ENCODE measurements at regions of chr1 and their contacts with region 1.

Region 1: DNA sequence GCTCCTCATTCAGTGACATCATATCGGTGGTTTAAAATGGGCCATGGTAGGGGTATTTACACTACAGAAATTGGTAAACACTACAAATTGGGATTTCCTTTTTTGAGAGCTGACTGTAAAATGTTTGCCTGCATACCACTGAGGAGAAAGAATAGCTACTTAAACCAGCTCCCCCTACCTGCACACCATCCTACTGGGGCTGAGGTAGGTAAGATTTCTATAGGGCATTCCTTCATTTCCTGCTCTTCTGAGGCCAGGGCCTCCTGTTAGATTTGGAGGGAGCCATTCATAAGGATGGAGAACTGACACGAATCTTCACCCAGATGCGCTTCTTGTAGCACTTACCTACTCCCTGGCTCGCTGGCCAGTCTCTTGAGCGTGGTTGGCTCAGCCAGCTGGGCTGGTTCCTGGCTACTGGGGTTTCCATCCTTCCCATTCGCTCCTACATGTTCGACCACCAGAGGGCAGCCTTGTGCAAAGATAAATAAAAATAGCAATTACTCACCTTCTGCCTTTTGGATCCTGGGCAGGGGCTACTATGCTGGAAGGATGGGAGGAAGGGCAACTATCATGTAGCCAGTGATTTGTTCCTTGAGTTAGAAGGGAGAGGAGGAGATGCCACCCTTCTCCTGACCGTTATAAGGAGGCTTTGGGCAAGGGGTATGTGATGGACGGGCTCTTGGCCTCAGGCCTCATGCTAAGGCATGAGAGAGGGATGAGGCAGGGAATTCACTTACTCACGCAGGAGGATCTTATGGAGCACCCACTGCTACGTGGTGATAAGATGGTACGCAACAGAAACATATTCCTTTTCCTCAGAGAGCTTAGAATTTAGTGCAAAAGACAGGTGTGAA is 10.7 kb downstream of the OPTC start:
- DNase-seq: peak; percentile 96
- H3K4me3 Mint-ChIP-seq: no peak overlapping the region
- H3K27ac Mint-ChIP-seq: no peak overlapping the region
- H3K4me1 Mint-ChIP-seq: peaks cover 22% of the 10 kb centered on the region
- H3K27me3 Mint-ChIP-seq: peaks cover 22% of the 10 kb centered on the region
- CTCF ChIP-seq: peak; percentile 94

Region 2: GRCh38 chr1:202599677-202600431 is 904.8 kb before region 1 on chr1:
- CTCF ChIA-PET with region 1: no interaction called
- POLR2A ChIA-PET with region 1: no interaction called
- intact Hi-C with region 1: no loop called
- DNase-seq: peak; percentile 89
- H3K4me3 Mint-ChIP-seq: no peak overlapping the region
- H3K27ac Mint-ChIP-seq: no peak overlapping the region
- H3K4me1 Mint-ChIP-seq: peaks cover 2% of the 10 kb centered on the region
- H3K27me3 Mint-ChIP-seq: no peaks in the 10 kb centered on the region
- CTCF ChIP-seq: peak; percentile 99

Region 3: DNA sequence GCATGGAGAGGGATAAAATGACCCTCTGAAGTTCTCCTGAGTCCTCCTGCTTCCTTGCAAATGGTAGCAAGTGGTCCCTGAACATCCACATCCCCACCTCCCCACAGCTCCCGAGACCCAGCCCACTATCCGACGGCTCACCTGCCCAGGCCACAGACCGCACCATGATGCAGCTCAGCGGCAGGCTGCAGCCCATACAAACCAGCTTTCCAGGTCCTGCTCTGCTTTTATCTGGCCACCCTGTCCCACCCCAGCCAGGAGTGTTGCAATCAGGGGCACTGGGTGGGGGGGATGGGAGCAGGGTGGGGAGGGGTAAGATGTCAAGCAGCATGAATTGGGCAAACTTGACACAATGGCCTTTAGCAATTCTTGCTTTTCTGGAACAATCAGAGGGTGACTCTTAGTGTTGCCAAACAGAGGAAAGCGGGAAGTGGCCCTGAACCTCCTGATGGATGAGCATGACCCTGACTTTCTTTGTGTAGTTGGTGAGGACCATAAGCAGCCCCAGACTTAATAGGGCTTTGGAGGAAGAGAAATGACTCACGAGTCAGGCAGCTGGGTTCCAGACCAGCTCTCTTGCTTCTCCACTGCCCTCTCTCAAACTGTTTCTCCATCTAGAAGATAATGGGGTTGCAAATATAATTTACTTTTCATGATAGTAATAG is 275.0 kb before region 1 on chr1 and contains the start of gene CHIT1:
- CTCF ChIA-PET with region 1: no interaction called
- POLR2A ChIA-PET with region 1: no interaction called
- intact Hi-C with region 1: no loop called
- DNase-seq: no peak
- H3K4me3 Mint-ChIP-seq: no peak within 1 kb of the TSS
- H3K27ac Mint-ChIP-seq: no peak within 1 kb of the TSS
- H3K4me1 Mint-ChIP-seq: no peaks in the 10 kb centered on the region
- H3K27me3 Mint-ChIP-seq: peaks cover 81% of the 10 kb centered on the region
- CTCF ChIP-seq: no peak
- total RNA-seq, gene CHIT1: not detected in 2 replicates

Region 4: DNA sequence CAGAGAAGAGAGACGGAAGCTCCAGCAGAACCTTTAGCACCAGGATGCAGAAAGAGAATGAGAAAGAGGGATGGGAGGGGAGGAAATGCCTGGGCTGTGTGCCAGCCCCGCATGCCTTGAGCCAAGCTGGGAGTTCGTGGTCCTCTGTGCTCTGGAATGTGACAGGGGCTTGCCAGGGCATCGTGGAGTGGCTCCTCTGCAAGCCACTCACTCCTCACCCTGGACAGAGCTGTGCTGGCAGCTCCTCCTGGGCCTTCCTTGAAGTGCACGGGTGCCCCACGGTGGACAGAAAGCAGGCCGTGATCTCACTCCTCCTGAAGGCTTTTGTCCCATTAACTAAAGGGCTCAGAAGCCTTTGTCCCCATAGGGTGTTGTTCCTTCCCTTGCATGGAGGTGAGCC is 63.9 kb before region 1 on chr1:
- CTCF ChIA-PET with region 1: no interaction called
- POLR2A ChIA-PET with region 1: no interaction called
- intact Hi-C with region 1: no loop called
- DNase-seq: peak; percentile 61
- H3K4me3 Mint-ChIP-seq: no peak overlapping the region
- H3K27ac Mint-ChIP-seq: no peak overlapping the region
- H3K4me1 Mint-ChIP-seq: no peaks in the 10 kb centered on the region
- H3K27me3 Mint-ChIP-seq: peaks cover 66% of the 10 kb centered on the region
- CTCF ChIP-seq: peak; percentile 48

Region 5: DNA sequence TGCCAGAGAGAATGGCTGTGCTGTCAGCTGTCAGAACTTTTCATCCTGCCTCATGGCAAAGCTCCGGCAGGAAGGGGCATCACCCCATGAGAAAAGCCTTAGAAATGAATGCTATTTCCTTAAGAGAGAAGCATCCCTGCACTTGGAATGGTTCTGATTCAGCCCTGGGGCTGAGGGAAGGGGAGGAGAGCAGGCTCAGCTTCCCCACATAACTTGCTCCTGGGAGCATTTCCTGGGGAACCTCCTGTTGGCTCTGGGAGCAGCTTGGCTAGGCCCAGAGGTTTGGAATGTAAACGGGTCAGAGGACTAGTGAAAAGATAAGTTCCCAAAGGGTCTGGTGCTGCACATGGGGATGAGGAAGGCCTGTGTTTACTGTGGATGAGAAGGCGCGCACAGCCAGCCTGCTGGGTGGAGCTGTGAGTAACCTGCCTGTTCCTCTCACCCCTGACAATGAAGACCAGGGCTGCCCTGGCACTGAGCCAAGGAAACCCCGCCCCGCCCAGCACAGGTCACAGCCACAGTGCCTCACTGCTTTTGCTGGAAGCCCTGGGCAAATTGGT is 24.0 kb before region 1 on chr1:
- CTCF ChIA-PET with region 1: interaction called, 12 read pairs
- POLR2A ChIA-PET with region 1: no interaction called
- intact Hi-C with region 1: no loop called
- DNase-seq: peak; percentile 92
- H3K4me3 Mint-ChIP-seq: no peak overlapping the region
- H3K27ac Mint-ChIP-seq: no peak overlapping the region
- H3K4me1 Mint-ChIP-seq: peaks cover 20% of the 10 kb centered on the region
- H3K27me3 Mint-ChIP-seq: peaks cover 21% of the 10 kb centered on the region
- CTCF ChIP-seq: no peak

Region 6: DNA sequence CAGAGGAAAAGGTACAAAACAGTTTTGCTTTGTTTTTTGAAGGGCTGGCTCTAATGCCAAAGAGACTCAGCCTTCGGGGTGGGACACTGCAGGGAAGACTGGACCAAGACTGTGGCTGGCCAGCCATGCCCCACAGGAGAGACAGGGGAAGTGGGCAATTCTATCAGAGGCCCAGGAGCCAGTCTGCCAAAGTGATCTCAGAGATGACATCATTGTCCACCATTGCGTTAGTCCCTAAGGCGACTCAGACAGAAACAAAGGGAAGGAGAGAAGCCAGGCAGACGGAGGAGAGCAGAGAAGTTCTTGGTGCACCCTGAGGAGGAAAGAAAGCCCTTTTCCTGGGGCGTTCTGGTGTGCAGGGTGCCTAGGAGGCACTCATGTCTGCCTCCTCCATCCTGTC is 15.7 kb after region 1 on chr1:
- CTCF ChIA-PET with region 1: interaction called, 15 read pairs
- POLR2A ChIA-PET with region 1: interaction called, 3 read pairs
- intact Hi-C with region 1: no loop called
- DNase-seq: no peak
- H3K4me3 Mint-ChIP-seq: no peak overlapping the region
- H3K27ac Mint-ChIP-seq: no peak overlapping the region
- H3K4me1 Mint-ChIP-seq: peaks cover 10% of the 10 kb centered on the region
- H3K27me3 Mint-ChIP-seq: no peaks in the 10 kb centered on the region
- CTCF ChIP-seq: no peak

Region 7: GRCh38 chr1:203673550-203674427 is 169.2 kb after region 1 on chr1:
- CTCF ChIA-PET with region 1: interaction called, 14 read pairs
- POLR2A ChIA-PET with region 1: interaction called, 3 read pairs
- intact Hi-C with region 1: no loop called
- DNase-seq: peak; percentile 99
- H3K4me3 Mint-ChIP-seq: peak overlapping the region; percentile 1
- H3K27ac Mint-ChIP-seq: peak overlapping the region; percentile 6
- H3K4me1 Mint-ChIP-seq: peaks cover 36% of the 10 kb centered on the region
- H3K27me3 Mint-ChIP-seq: no peaks in the 10 kb centered on the region
- CTCF ChIP-seq: peak; percentile 39

Region 8: DNA sequence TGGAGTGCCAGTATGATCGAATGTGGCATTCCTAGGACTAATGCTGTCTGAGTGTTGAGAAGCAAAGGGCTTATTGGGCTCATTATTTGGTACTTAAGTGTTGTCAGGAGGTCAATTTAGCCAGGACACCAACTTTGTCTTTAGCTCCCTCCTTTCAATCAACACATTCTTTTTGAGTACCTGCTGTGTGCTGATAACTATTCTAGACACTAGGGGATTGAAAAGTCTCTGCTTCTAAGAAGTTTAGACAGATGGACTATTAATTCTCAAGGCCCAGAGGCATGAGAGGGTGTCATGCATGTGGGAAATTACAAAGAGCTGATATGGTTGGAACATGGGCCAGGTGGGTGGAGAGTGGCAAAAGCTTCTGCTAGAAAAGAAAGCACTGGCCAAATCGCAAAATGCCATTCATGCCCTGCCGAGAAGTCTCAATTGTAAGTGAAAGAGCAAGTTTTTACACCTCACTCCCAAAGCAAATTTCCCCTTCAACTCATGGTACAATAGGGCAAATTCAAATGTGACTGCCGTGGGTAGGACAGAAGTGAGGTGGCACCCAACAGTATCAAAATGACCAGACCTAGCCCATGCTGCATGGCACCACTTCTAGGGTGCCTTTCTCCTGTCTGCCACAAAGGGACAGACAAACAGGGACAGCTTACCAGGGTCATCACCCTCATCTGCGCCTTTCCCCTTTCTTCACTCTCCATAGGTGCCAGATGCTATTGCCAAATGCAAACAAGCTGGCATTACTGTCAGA is 206.8 kb after region 1 on chr1:
- CTCF ChIA-PET with region 1: interaction called, 40 read pairs
- POLR2A ChIA-PET with region 1: no interaction called
- intact Hi-C with region 1: no loop called
- DNase-seq: no peak
- H3K4me3 Mint-ChIP-seq: no peak overlapping the region
- H3K27ac Mint-ChIP-seq: no peak overlapping the region
- H3K4me1 Mint-ChIP-seq: peaks cover 7% of the 10 kb centered on the region
- H3K27me3 Mint-ChIP-seq: no peaks in the 10 kb centered on the region
- CTCF ChIP-seq: no peak

Region 9: DNA sequence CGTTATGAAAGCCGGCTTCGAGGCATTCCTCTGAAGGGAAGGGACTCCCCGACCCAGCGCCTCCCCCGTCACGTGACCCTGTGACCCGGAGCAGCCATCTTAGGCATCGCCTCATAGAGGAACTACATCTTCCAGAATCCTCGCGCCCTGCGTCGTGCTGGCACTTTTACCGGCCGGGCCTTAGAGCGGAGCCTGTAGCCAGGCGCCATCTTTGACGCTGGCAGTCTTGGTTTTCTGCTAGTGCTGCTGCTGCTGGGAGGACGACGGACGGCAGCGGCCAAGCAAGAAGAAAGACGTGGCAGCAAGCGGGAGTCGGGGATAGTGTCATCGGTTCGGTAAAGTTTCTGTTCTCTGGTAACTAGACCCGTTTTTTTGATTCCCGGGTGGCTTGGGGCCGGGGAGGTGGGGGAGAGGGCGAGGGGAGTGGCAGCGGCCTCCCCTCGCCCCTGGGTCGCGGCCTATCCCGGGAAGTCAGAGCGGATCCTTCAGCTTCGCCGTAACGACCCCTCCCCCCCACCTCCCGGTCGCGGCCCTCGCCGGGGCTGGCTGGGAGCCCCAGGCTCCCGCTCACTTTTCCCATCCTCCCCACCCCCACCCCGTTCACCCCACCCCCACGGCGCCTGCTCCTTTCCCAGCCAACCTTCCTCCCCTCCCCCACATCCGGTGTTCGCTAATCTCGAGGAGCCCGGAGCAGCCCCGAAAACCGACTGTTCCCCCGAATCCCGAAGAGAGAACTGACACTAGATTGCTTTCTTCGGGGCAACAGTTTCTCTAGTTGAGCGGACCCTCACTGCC is 291.0 kb after region 1 on chr1 and contains the starts of genes ZBED6 and ZC3H11A:
- CTCF ChIA-PET with region 1: interaction called, 23 read pairs
- POLR2A ChIA-PET with region 1: interaction called, 3 read pairs
- intact Hi-C with region 1: loop called (anchors 2 kb)
- DNase-seq: peak; percentile 100
- H3K4me3 Mint-ChIP-seq: peak within 1 kb of the TSS; percentile 86
- H3K27ac Mint-ChIP-seq: peak within 1 kb of the TSS; percentile 98
- H3K4me1 Mint-ChIP-seq: peaks cover 44% of the 10 kb centered on the region
- H3K27me3 Mint-ChIP-seq: no peaks in the 10 kb centered on the region
- CTCF ChIP-seq: no peak
- total RNA-seq, gene ZBED6: 68.2 and 69.8 TPM in 2 replicates
- total RNA-seq, gene ZC3H11A: 148 and 156 TPM in 2 replicates